ENCODE measurements at regions of chr10 and their contacts with region 1.

Region 1: GRCh38 chr10:84256510-84257342 is 11.9 kb downstream of the RGR start:
- DNase-seq: peak in 8 of 10 donors; percentile 14 to 71 (median 60)
- H3K4me3 ChIP-seq: peak overlapping the region in 1 of 59 donors; percentile 7
- H3K27ac ChIP-seq: no peak overlapping the region
- H3K27me3 ChIP-seq: no peaks in the 10 kb centered on the region
- CTCF ChIP-seq: peak in 55 of 56 donors; percentile 31 to 84 (median 72)

Region 2: DNA sequence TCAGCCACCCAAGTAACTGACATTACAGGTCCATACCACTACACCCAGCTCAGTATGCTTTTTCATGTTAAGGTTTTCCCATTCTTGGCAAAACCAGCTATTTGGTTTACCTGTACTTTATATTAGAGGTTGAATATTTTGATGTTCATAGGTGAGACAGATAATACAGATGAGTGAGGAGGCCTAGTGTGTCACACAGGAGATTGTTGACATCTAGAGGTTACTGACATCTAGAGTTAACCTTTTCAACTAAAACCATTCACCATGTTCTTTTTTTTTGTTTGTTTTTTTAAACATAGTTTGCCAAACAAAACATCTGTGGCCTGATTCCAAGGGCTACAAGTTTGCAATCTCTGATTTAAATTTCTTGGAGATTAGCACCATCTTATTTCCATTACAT is 109.4 kb before region 1 on chr10:
- intact Hi-C with region 1: loop called (anchors 2 to 5 kb)
- DNase-seq: no peak
- H3K4me3 ChIP-seq: no peak overlapping the region
- H3K27ac ChIP-seq: no peak overlapping the region
- H3K27me3 ChIP-seq: no peaks in the 10 kb centered on the region
- CTCF ChIP-seq: no peak

Region 3: GRCh38 chr10:84214612-84215235 is 42.0 kb before region 1 on chr10:
- intact Hi-C with region 1: no loop called
- DNase-seq: no peak
- H3K4me3 ChIP-seq: no peak overlapping the region
- H3K27ac ChIP-seq: no peak overlapping the region
- H3K27me3 ChIP-seq: no peaks in the 10 kb centered on the region
- CTCF ChIP-seq: peak in 41 of 56 donors; percentile 7 to 56 (median 30)

Region 4: GRCh38 chr10:84328418-84329195 is 71.9 kb after region 1 on chr10 and contains the start of gene CCSER2:
- intact Hi-C with region 1: no loop called
- DNase-seq: peak; percentile 87 to 99 (median 94)
- H3K4me3 ChIP-seq: peak within 1 kb of the TSS; percentile 62 to 99 (median 86)
- H3K27ac ChIP-seq: peak within 1 kb of the TSS; percentile 62 to 98 (median 92)
- H3K27me3 ChIP-seq: no peaks in the 10 kb centered on the region
- CTCF ChIP-seq: peak in 20 of 56 donors; percentile 1 to 48 (median 26)
- total RNA-seq, gene CCSER2: 103 to 206 (median 150) TPM

Measured in dorsolateral prefrontal cortex (tissue), 120 donors.